Stomach (tissue), 19 donors: ENCODE measurements at regions of chr14 and their contacts with region 1.

Region 1: GRCh38 chr14:22319526-22320361 is 269.3 kb downstream of the DAD1 start:
- DNase-seq: peak; percentile 69 to 82
- H3K4me3 ChIP-seq: no peak overlapping the region
- H3K27ac ChIP-seq: no peak overlapping the region
- H3K4me1 ChIP-seq: no peaks in the 10 kb centered on the region
- H3K27me3 ChIP-seq: no peaks in the 10 kb centered on the region
- CTCF ChIP-seq: peak in 5 of 7 experiments; percentile 33 to 73 (median 56)
- EP300 ChIP-seq: no peak
- POLR2A ChIP-seq: no peak

Region 2: GRCh38 chr14:22370084-22370847 is 50.5 kb after region 1 on chr14:
- intact Hi-C with region 1: loop called (anchors 5 kb)
- DNase-seq: peak in 1 of 2 donors; percentile 79
- H3K4me3 ChIP-seq: no peak overlapping the region
- H3K27ac ChIP-seq: peak overlapping the region in 4 of 5 donors; percentile 49 to 53 (median 51)
- H3K4me1 ChIP-seq: peaks cover 5 to 24% (median 17%) of the 10 kb centered on the region in 4 donors
- H3K27me3 ChIP-seq: no peaks in the 10 kb centered on the region
- CTCF ChIP-seq: no peak
- EP300 ChIP-seq: no peak
- POLR2A ChIP-seq: no peak

Region 3: DNA sequence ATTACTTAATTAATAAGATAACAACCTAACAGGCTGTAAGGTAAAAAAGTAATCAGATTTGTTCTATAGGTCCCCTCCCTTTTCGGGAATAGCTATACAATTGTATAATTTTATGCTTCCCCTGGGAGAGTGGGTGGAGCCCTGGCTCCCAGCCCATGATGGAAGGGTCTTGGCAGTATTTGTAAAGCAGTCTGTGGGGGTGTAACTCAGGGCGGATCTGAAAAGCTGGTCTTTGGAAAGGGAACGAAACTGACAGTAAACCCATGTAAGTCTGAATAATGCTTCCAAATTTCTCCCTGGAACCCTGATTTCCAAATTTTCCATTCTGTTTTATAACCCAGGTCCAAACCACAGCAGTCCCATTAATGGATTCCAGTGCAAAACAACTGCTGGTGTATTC is 158.9 kb after region 1 on chr14:
- intact Hi-C with region 1: no loop called
- DNase-seq: peak in 1 of 2 donors; percentile 81
- H3K4me3 ChIP-seq: no peak overlapping the region
- H3K27ac ChIP-seq: no peak overlapping the region
- H3K4me1 ChIP-seq: peaks cover 4 to 21% (median 13%) of the 10 kb centered on the region in 4 donors
- H3K27me3 ChIP-seq: no peaks in the 10 kb centered on the region
- CTCF ChIP-seq: no peak
- EP300 ChIP-seq: no peak
- POLR2A ChIP-seq: no peak